PC-9 (cell line): ENCODE measurements at regions of chr7 and their contacts with region 1.

Region 1: DNA sequence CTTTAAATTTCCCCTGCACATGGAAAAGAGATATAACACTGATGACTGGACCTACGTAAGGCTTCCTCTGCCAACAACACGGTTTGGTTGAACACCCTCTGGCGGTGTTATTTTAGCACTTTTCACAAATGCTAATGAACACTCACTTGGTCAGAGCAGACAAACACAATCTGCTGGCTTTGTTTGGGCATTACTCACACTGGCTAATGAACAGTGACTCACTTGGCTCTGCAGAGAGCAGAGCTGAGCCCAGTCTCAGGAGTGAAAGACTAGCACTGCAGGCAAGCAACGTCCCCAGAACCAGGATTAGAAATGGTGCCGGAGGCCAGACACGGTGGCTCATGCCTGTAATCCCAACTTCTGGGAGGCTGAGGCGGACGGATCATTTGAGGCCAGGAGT is 430.8 kb downstream of the PLXNA4 start:
- DNase-seq: peak; percentile 75 to 89
- H3K4me3 ChIP-seq: no peak overlapping the region
- H3K27ac ChIP-seq: peak overlapping the region; percentile 33; the same call in 1 of the 2 replicates
- H3K4me1 ChIP-seq: peaks cover 28% of the 10 kb centered on the region
- H3K27me3 ChIP-seq: no peaks in the 10 kb centered on the region
- CTCF ChIP-seq: peak; percentile 51

Region 2: GRCh38 chr7:132065193-132065988 is 80.1 kb before region 1 on chr7:
- CTCF ChIA-PET with region 1: no interaction called
- POLR2A ChIA-PET with region 1: no interaction called
- intact Hi-C with region 1: loop called (anchors 2 kb)
- DNase-seq: peak; percentile 82 to 85
- H3K4me3 ChIP-seq: no peak overlapping the region
- H3K27ac ChIP-seq: peak overlapping the region; percentile 70
- H3K4me1 ChIP-seq: peaks cover 23% of the 10 kb centered on the region
- H3K27me3 ChIP-seq: no peaks in the 10 kb centered on the region
- CTCF ChIP-seq: no peak